MCF 10A (cell line): ENCODE measurements at regions of chr22 and their contacts with region 1.

Region 1: DNA sequence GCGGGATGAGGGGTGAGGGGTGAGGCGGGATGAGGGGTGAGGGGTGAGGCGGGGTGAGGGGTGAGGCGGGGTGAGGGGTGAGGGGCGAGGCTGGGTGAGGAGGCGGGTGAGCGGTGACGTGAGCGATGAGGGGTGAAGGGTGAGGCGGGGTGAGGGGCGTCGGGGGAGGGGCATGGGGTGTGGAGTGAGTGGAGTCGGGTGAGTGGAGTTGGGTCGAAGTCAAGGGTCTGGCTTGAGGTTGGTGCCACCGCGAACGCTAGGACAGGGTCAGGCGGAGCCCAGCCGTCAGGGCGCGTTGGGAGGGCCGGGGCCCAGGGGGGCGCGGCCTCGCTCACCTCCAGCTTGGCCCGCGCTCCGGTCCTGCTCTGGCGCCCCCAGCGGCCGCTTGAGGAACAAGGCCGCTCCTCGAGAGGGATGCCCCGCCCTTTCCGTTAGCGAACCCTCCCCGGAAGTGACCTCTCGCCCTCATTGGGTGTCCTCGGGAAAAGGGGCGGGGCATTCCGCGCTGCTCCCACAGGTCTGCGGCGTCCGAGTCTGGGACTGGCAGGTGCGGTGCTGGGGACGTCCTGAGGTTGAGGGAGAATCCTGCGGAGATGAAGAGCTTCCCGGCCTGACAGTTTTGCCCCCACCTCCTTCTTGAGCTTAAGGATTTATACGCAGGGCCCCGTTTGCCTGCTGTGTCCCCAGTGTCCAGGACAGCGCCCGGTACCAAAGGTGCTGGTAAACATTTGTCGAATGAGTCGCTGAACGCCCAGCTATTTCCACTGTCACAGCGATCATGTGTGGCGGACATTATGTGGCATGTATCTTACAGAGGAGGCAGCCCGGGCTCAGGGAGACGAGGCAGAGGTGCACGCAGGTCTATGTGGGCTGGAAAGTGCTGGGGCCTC is at the start of gene SYCE3:
- DNase-seq: peak; percentile 97
- H3K4me3 Mint-ChIP-seq: peak within 1 kb of the TSS; percentile 90
- H3K27ac Mint-ChIP-seq: peak within 1 kb of the TSS; percentile 91
- H3K4me1 Mint-ChIP-seq: peaks cover 28% of the 10 kb centered on the region
- H3K27me3 Mint-ChIP-seq: no peaks in the 10 kb centered on the region
- CTCF ChIP-seq: peak; percentile 91
- total RNA-seq, gene SYCE3: 0.82 and 1.2 TPM in 2 replicates

Region 2: DNA sequence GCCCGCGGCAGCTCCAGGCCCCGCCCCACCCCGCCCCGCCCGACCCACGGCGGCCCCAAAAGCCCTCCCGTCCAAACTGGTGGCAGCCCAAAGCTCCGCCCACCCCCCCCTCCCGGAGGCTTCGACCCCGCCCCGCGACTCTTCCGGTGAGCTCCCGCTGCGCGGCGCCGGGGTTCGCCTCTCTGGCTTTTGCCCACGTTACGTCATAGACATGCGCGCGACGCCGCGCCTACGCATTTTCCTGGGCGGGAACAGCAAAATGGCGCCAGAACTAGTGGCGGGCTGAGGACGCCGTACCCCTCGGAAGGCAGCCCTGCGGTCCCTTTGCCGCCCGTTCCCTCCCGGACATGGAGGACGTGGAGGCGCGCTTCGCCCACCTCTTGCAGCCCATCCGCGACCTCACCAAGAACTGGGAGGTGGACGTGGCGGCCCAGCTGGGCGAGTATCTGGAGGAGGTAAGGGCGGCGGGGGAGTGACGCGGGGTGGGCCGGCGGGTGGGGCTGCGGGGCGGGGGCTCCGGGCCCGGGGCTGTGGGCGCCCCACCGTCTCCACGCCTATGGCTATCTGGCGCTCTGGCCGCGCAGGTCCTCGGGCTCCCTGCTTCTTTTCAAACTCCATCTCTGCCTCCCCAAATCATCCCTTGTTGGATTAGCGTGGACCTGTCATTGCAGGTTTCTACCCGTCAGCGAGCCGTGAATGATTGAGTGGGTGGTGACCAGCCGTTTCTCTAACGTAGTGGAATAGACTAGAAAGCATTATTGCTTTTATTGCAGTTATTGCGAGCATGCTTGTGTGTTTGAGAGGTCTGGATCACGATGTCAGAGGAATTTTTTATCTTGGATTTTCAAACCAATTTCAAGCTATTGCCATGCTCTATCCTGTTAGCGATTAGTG is 54.5 kb before region 1 on chr22 and contains the start of gene NCAPH2:
- CTCF ChIA-PET with region 1: interaction called, 7 read pairs
- POLR2A ChIA-PET with region 1: interaction called, 30 read pairs
- intact Hi-C with region 1: no loop called
- DNase-seq: peak; percentile 96
- H3K4me3 Mint-ChIP-seq: peak within 1 kb of the TSS; percentile 92
- H3K27ac Mint-ChIP-seq: peak within 1 kb of the TSS; percentile 93
- H3K4me1 Mint-ChIP-seq: peaks cover 12% of the 10 kb centered on the region
- H3K27me3 Mint-ChIP-seq: no peaks in the 10 kb centered on the region
- CTCF ChIP-seq: no peak
- total RNA-seq, gene NCAPH2: 31.6 and 39.8 TPM in 2 replicates

Region 3: DNA sequence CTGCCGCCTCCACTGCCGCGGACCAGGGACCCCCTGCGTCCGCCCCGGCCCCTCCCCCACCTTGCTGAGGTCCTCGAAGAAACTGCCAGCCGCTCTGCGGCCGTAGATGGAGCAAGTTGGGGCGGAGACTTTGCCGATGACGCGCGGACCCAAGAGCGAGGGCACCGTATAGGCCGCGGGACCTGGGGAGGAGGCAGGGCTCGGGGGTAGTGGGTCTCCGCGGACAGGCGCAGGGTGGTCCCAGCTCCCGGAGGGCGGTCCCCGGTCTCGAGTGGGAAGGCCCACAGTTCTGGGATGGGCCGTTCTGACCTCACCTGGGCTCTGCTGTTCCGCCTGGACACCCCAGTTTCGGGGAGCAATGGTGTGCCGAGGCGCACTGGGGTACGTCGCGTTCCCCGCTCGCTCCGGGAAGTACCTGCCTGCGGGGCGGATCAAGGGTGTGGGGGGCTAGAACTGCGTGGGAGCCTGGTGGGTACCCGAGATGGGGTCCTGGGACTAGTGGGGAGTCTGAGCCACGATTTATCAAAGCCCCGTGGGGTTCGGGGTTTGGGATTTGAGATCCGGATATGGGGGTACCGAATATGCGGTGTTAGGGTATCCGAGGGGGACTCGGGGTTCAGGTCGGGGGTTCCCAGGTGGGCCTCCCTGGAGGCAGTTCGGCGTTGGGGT is 31.8 kb before region 1 on chr22:
- CTCF ChIA-PET with region 1: interaction called, 17 read pairs
- POLR2A ChIA-PET with region 1: interaction called, 105 read pairs
- intact Hi-C with region 1: loop called (anchors 1 kb)
- DNase-seq: peak; percentile 94
- H3K4me3 Mint-ChIP-seq: peak overlapping the region; percentile 85
- H3K27ac Mint-ChIP-seq: peak overlapping the region; percentile 97
- H3K4me1 Mint-ChIP-seq: peaks cover 22% of the 10 kb centered on the region
- H3K27me3 Mint-ChIP-seq: no peaks in the 10 kb centered on the region
- CTCF ChIP-seq: no peak

Region 4: GRCh38 chr22:50544078-50544745 is 18.6 kb before region 1 on chr22:
- CTCF ChIA-PET with region 1: interaction called, 10 read pairs
- POLR2A ChIA-PET with region 1: interaction called, 60 read pairs
- intact Hi-C with region 1: no loop called
- DNase-seq: peak; percentile 18
- H3K4me3 Mint-ChIP-seq: peak overlapping the region; percentile 36
- H3K27ac Mint-ChIP-seq: peak overlapping the region; percentile 28
- H3K4me1 Mint-ChIP-seq: peaks cover 31% of the 10 kb centered on the region
- H3K27me3 Mint-ChIP-seq: no peaks in the 10 kb centered on the region
- CTCF ChIP-seq: peak; percentile 26

Region 5: DNA sequence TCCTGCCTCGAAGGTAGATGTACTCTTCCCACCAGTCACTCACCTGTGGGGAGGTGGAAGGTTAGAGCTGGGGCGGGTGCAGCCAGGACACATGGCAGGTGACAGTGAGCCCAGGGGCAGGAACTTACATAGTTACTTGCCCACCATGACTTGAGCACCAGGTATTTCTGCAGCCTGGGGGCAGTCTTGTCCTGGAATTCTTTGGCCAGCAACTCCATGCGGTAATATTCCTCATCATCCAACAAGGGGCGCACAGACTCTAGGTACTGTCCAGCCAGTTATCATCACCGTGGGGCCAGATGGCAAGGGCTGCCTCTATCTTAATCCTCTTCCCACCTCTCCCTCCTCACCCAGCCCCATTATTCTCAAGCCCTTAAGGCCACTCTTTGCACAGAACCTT is 13.3 kb after region 1 on chr22:
- CTCF ChIA-PET with region 1: interaction called, 13 read pairs
- POLR2A ChIA-PET with region 1: interaction called, 38 read pairs
- intact Hi-C with region 1: no loop called
- DNase-seq: peak; percentile 62
- H3K4me3 Mint-ChIP-seq: no peak overlapping the region
- H3K27ac Mint-ChIP-seq: no peak overlapping the region
- H3K4me1 Mint-ChIP-seq: no peaks in the 10 kb centered on the region
- H3K27me3 Mint-ChIP-seq: no peaks in the 10 kb centered on the region
- CTCF ChIP-seq: peak; percentile 12

Region 6: GRCh38 chr22:50620593-50621355 is 58.0 kb after region 1 on chr22:
- CTCF ChIA-PET with region 1: interaction called, 4 read pairs
- POLR2A ChIA-PET with region 1: interaction called, 23 read pairs
- intact Hi-C with region 1: no loop called
- DNase-seq: peak; percentile 17
- H3K4me3 Mint-ChIP-seq: peak overlapping the region; percentile 68
- H3K27ac Mint-ChIP-seq: no peak overlapping the region
- H3K4me1 Mint-ChIP-seq: peaks cover 26% of the 10 kb centered on the region
- H3K27me3 Mint-ChIP-seq: no peaks in the 10 kb centered on the region
- CTCF ChIP-seq: no peak